ENCODE measurements at regions of chr21 and their contacts with region 1.

Region 1: GRCh38 chr21:36929622-36930021 is 36.8 kb downstream of the HLCS start:
- DNase-seq: no peak
- CTCF ChIP-seq: no peak

Region 2: GRCh38 chr21:36429947-36430546 is 499.6 kb before region 1 on chr21:
- in situ Hi-C with region 1: loop called (anchors 10 kb)
- DNase-seq: peak; percentile 86
- CTCF ChIP-seq: no peak

Region 3: DNA sequence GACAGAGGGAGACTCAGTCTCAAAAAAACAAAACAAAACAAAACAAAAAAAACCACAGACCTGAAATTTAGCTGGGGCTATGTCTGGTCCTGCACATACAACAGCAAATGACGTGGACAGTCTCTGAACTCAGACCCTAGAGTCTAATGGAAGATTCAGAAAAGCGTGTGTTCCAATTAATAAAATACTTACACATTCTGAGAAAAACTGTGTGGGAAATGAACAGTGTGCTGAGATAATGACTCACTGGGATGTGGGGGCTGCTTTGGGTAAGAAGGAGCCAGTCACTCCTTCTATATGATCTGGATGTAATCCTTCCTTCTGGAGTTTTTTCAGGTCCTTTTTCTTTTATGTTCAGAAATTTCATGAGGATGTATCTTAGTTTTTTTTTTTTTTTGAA is 479.1 kb before region 1 on chr21:
- in situ Hi-C with region 1: no loop called
- DNase-seq: no peak
- CTCF ChIP-seq: no peak

Region 4: DNA sequence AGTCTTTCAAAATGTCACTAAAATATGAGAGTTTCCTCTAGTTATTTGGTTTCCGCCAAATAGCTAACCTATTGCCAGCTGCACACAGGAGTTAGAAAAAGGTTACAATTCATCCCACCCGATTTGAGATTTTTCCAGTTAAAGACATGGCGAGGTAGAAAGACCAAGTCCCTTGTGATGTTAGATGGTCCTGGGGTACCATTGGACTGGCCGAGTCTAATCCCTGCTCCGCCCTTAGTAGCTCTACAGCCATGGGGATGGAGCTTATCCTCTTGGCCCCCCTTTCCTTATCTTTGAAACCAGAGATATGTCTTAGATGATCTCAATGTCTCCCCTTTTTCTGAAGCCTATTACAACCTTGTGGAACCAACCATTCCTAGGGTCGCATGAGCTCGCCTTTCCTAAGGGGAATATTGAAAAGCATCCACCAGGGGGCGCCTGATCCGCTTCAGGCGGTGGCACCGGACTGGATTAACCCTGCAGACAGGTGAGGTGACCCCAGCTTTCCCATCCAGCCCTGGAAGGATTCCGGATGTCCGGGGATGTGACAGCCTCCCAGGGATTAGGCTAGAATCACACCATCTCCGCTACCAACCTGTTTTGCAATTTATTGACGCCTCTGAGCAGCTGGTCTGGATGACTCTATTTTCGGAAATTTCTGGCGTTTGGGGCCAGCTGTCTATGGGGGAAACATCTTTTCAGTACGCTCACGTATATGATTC is 299.0 kb before region 1 on chr21:
- in situ Hi-C with region 1: no loop called
- DNase-seq: peak; percentile 77
- CTCF ChIP-seq: peak; percentile 73

Region 5: DNA sequence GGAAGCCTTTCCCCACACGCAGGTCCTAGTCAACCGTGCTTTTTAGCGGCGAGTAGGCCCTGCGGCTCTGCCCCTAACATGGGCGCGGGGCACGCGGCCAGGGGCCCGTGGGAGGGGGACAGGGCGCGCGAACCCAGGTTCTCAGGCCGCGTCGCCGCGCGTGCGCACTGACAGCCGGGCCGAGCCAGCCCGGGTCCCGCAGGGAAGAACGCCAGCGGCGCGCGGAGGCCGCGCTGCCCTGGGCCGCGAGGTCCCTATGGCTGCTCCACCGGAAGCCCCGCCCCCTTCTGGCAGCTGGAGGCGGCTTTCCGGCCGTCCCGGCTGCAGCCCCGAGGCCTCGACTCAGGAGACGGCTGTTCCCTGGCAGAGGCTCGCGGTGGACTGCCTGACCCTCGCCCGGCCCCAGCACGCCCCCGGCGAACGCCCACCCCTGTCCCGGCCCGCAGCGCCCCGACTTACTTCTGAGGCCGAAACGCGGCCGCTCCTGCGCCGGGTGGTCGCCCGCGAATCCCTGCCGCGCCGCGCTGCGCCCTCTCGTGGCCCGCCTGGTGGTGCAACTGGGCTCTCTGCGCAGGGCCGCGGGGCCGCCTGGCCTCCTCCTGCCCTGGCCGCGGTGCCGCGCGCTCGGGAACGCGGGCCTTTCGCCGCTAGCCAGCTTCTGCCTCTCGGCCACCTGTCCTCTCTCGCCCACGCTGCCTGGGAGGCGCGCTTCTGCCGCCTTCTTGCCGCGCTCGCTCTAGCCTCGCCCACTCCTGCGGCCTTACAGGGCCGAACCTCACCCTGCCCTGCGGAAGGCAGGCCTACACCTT is 60.3 kb after region 1 on chr21:
- in situ Hi-C with region 1: no loop called
- DNase-seq: peak; percentile 97
- CTCF ChIP-seq: peak; percentile 94